Activated CD4-positive, alpha-beta memory T cell treated with anti-CD3 and anti-CD28 coated beads, Interleukin-2, amount 10 ng/mL, durations not matched to agents 7 days and 5 days (primary cell): ENCODE measurements at regions of chr2 and their contacts with region 1.

Region 1: DNA sequence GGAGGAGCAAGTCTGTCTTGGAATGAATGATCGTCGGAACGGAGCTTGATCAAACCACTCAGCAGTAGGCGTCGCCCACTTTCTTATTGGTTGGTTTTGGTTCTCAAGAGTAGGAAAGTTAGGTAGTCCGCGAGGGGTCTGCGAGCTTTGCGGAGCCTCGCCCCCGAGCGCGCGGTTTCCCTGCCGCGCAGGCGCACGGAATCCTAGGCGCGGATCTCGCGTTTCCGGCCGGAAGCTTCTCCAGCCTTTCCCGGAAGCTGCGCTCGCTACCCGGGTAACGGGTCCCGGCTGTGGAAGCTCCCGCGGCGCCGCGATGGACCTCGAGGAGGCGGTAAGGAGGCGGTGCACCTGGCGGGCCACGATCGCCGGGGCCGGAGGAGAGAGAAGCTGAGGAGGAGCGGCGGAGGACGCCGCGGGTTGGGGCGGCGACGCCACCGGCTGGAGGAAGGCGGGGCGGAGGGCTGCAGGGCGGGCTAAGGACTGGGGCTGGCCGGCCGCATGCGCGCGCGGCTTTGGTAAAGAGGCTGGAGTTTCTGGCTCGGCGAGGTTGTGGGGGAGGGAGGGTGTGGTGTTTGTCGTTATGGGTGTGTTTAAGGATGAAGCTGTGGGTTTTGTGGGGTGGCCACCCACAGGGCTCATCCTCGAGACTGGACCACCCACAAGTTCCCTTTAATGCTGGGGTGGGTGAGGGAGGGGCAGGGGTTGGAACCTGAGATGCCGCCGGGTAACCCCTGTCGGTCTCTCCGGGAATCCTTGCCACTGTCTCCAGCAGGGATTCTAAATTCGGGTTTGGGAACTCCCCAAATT is at the start of gene TAF1B:
- DNase-seq: peak; percentile 91
- H3K4me3 Mint-ChIP-seq: peak within 1 kb of the TSS; percentile 87
- H3K27ac Mint-ChIP-seq: peak within 1 kb of the TSS; percentile 87
- H3K4me1 Mint-ChIP-seq: peaks cover 49% of the 10 kb centered on the region
- H3K27me3 Mint-ChIP-seq: no peaks in the 10 kb centered on the region
- total RNA-seq, gene TAF1B: 49.4 to 54.7 TPM

Region 2: DNA sequence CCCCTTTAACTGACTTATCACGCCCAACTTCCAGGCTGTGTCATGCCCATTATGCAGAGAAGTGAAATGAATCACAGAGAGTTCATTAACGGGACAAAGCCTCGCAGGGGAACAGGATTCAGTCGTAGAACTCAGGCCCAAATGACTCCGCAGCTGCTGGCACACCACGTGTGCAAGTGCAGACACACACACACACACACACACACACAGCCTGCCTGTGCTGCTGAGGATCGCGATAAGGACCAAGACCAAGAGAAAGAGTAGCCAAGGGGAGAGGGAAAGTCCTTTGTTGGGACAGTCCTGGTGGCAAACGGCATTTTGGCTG is 90.2 kb before region 1 on chr2:
- CTCF ChIA-PET with region 1: no interaction called
- POLR2A ChIA-PET with region 1: interaction called, 20 read pairs
- DNase-seq: peak; percentile 80
- H3K4me3 Mint-ChIP-seq: peak overlapping the region; percentile 95
- H3K27ac Mint-ChIP-seq: peak overlapping the region; percentile 100
- H3K4me1 Mint-ChIP-seq: peaks cover 76% of the 10 kb centered on the region
- H3K27me3 Mint-ChIP-seq: peaks cover 8% of the 10 kb centered on the region

Region 3: DNA sequence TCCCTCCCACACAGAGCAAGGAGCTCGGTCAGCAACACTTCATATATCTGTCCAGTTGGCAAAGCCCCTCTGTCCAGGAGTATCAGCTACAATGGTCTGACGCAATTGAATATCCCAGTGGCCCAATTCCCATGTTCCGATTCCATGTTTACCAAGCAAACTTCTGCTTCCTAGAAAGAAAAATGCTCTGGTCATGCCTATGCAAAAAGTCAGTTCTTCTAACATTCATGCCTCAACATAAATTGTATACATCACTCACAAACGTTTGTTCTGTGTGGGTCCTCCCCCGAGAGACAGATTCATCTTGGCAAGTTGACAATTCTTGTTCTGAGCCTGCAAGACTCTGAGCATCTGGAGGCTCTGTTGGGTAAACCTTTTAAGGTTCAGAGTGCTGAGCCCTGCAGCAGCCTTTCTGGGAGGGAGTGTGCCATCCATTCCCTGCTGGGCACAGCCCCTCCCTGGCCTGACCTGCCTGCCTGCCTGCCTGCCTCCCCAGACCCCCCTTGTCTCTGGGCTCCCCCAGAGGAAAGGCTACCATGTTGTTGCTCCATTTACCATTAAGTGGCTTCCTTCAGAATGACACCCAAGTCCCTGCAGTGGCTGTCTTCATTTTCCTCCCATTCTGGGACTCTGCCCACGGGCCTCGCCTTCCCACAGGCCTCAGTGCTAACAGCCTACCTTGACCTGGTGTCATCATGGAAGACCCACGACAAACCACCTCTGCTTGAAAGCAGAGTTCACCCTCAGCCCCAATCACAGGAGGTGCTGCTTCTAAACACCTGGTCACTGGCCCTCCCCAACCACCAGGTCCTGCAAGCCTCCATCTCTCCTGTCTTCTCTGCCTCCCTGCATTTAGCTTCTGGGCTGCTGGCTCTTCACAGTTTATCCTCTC is 37.8 kb before region 1 on chr2:
- CTCF ChIA-PET with region 1: interaction called, 42 read pairs
- POLR2A ChIA-PET with region 1: interaction called, 47 read pairs
- DNase-seq: no peak
- H3K4me3 Mint-ChIP-seq: no peak overlapping the region
- H3K27ac Mint-ChIP-seq: no peak overlapping the region
- H3K4me1 Mint-ChIP-seq: peaks cover 16% of the 10 kb centered on the region
- H3K27me3 Mint-ChIP-seq: peaks cover 8% of the 10 kb centered on the region

Region 4: GRCh38 chr2:9857814-9858729 is 14.6 kb after region 1 on chr2:
- CTCF ChIA-PET with region 1: no interaction called
- POLR2A ChIA-PET with region 1: interaction called, 28 read pairs
- DNase-seq: no peak
- H3K4me3 Mint-ChIP-seq: no peak overlapping the region
- H3K27ac Mint-ChIP-seq: no peak overlapping the region
- H3K4me1 Mint-ChIP-seq: no peaks in the 10 kb centered on the region
- H3K27me3 Mint-ChIP-seq: no peaks in the 10 kb centered on the region

Region 5: GRCh38 chr2:10043906-10044601 is 200.6 kb after region 1 on chr2:
- CTCF ChIA-PET with region 1: interaction called, 7 read pairs
- POLR2A ChIA-PET with region 1: interaction called, 25 read pairs
- DNase-seq: peak; percentile 95
- H3K4me3 Mint-ChIP-seq: peak overlapping the region; percentile 80
- H3K27ac Mint-ChIP-seq: peak overlapping the region; percentile 81
- H3K4me1 Mint-ChIP-seq: peaks cover 44% of the 10 kb centered on the region
- H3K27me3 Mint-ChIP-seq: peaks cover 26% of the 10 kb centered on the region

Region 6: GRCh38 chr2:10057231-10058107 is 214.0 kb after region 1 on chr2:
- CTCF ChIA-PET with region 1: no interaction called
- POLR2A ChIA-PET with region 1: no interaction called
- DNase-seq: no peak
- H3K4me3 Mint-ChIP-seq: no peak overlapping the region
- H3K27ac Mint-ChIP-seq: no peak overlapping the region
- H3K4me1 Mint-ChIP-seq: peaks cover 5% of the 10 kb centered on the region
- H3K27me3 Mint-ChIP-seq: peaks cover 5% of the 10 kb centered on the region

Region 7: DNA sequence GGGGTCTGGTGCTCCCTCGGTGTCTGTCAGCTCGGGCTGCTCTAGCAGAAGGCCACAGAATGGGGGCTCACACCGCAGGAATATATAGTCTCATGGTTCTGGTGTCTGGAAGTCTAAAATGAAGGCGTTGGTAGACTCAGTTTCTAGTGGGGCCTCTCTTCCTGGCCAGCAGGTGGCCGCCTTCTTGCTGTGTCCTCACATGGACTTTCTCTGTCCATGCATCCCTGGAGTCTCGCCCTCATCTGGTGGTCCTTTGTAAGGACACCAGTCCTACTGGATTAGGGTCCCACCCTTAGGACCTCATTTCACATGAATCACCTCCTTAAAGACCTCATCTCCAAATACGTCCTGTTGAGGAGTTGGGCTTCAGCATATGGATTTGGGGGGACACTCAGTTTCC is 344.8 kb after region 1 on chr2:
- CTCF ChIA-PET with region 1: no interaction called
- POLR2A ChIA-PET with region 1: no interaction called
- DNase-seq: no peak
- H3K4me3 Mint-ChIP-seq: no peak overlapping the region
- H3K27ac Mint-ChIP-seq: no peak overlapping the region
- H3K4me1 Mint-ChIP-seq: peaks cover 6% of the 10 kb centered on the region
- H3K27me3 Mint-ChIP-seq: no peaks in the 10 kb centered on the region